Ovary (tissue), 10 donors: ENCODE measurements at regions of chr5 and their contacts with region 1.

Region 1: GRCh38 chr5:79235634-79236363 is at the start of gene JMY:
- DNase-seq: peak; percentile 88 to 93 (median 90)
- H3K4me3 ChIP-seq: peak within 1 kb of the TSS; percentile 59
- H3K27ac ChIP-seq: peak within 1 kb of the TSS; percentile 94 to 96
- H3K4me1 ChIP-seq: peaks cover 2% of the 10 kb centered on the region
- H3K27me3 ChIP-seq: no peaks in the 10 kb centered on the region
- CTCF ChIP-seq: peak in 1 of 3 donors; percentile 18
- EP300 ChIP-seq: no peak
- POLR2A ChIP-seq: peak; percentile 78
- total RNA-seq, gene JMY: 16.4 to 30.3 (median 22.1) TPM

Region 2: DNA sequence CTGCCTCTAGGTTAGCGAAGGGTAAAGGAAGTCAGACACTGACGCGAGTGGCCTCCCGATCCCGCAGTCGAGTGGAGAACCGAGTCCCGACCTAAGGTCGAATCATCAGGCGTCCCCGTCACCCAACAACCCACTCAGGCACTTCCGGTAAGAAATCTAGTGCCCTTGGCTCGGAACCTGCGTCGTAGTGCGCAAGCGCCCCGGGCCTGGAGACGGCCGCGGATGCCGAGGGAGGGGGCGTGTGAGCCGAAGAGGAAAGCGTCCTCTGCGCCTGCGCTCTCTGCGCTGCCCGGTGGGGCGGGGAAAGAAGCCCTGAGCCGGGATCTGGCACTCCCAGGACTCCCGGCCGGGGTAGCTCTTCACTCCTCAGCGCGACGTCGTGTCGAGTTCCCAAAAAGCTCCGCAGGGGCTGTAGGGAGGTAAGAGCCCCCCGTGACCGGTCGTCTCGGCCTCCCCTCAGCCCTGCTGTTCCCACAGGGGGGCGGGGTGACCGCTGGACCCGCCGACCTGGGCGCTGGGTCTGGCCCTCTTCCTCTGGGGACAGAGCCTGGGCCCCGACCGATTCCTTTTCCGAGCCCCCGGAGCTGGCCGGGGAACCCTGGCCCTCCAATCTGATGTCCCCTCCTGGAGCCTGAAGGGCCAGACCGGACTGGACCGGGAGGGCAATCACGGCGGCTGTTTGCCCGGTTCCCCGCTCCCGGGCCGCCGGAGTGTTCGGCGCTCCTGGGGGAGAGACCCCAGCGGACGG is 1172.1 kb after region 1 on chr5 and contains the start of gene ZFYVE16:
- intact Hi-C with region 1: loop called in 1 of 4 experiments (anchors 5 kb)
- DNase-seq: peak; percentile 99
- H3K4me3 ChIP-seq: peak within 1 kb of the TSS; percentile 96
- H3K27ac ChIP-seq: peak within 1 kb of the TSS; percentile 86 to 93
- H3K4me1 ChIP-seq: peaks cover 8% of the 10 kb centered on the region
- H3K27me3 ChIP-seq: no peaks in the 10 kb centered on the region
- CTCF ChIP-seq: peak; percentile 15 to 63 (median 52)
- EP300 ChIP-seq: peak; percentile 36
- POLR2A ChIP-seq: peak; percentile 79
- total RNA-seq, gene ZFYVE16: 29.9 to 59.0 (median 46.6) TPM